Ovary (tissue), 10 donors: ENCODE measurements at regions of chr12 and their contacts with region 1.

Region 1: GRCh38 chr12:103140286-103140685 is 182.8 kb downstream of the ASCL1 start:
- DNase-seq: no peak
- H3K4me3 ChIP-seq: no peak overlapping the region
- H3K27ac ChIP-seq: no peak overlapping the region
- H3K4me1 ChIP-seq: no peaks in the 10 kb centered on the region
- H3K27me3 ChIP-seq: no peaks in the 10 kb centered on the region
- CTCF ChIP-seq: no peak
- EP300 ChIP-seq: no peak
- POLR2A ChIP-seq: no peak

Region 2: DNA sequence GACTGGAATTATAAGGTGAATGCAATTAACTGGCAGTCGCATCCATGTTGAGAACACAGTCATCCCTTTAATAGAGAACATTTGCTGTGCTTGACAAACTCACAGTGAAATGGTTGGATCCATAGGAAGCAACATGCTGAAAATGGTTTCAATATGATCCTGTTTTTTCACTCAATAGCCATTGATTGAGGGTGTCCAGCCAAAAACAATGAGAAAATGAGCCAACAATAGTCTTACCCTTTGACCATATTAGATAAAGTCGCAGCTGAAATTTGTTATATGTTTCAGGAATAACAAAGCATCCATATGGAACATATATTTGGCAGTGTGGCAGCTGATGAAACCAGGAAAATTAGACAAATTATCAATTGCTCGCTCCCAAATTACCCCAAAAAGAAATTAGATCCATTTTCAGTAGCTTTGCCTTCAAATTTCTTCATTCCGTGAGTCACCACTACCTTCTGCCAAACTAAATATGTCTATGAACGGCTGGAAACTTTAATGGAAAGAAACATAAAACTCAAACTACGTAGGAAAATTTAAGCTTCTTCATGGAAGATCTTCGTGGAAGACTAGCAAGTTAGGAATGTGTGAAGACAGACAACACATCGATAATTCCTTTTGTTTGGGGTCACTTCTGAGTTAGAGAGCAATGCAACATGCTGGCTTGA is 677.4 kb before region 1 on chr12:
- intact Hi-C with region 1: no loop called
- DNase-seq: no peak
- H3K4me3 ChIP-seq: no peak overlapping the region
- H3K27ac ChIP-seq: no peak overlapping the region
- H3K4me1 ChIP-seq: peaks cover 3% of the 10 kb centered on the region
- H3K27me3 ChIP-seq: no peaks in the 10 kb centered on the region
- CTCF ChIP-seq: no peak
- EP300 ChIP-seq: no peak
- POLR2A ChIP-seq: no peak

Region 3: GRCh38 chr12:103109861-103110260 is 30.4 kb before region 1 on chr12:
- intact Hi-C with region 1: loop called in 1 of 4 experiments (anchors 2 kb)
- DNase-seq: no peak
- H3K4me3 ChIP-seq: no peak overlapping the region
- H3K27ac ChIP-seq: no peak overlapping the region
- H3K4me1 ChIP-seq: no peaks in the 10 kb centered on the region
- H3K27me3 ChIP-seq: no peaks in the 10 kb centered on the region
- CTCF ChIP-seq: no peak
- EP300 ChIP-seq: no peak
- POLR2A ChIP-seq: no peak